GM12878 (cell line): ENCODE measurements at regions of chr20 and their contacts with region 1.

Region 1: GRCh38 chr20:46013826-46014516 is 5.3 kb downstream of the MMP9 start:
- DNase-seq: no peak
- ATAC-seq: peak; percentile 94
- H3K4me3 ChIP-seq: no peak overlapping the region
- H3K27ac ChIP-seq: no peak overlapping the region
- H3K4me1 ChIP-seq: peaks cover 10% of the 10 kb centered on the region
- H3K27me3 ChIP-seq: peaks cover 11 to 12% of the 10 kb centered on the region in 2 experiments; a peak in 3 of 4 replicates
- CTCF ChIP-seq: peak; percentile 60 to 83 (median 63)
- EP300 ChIP-seq: no peak
- POLR2A ChIP-seq: no peak
- RAD21 ChIP-seq: peak; percentile 51

Region 2: DNA sequence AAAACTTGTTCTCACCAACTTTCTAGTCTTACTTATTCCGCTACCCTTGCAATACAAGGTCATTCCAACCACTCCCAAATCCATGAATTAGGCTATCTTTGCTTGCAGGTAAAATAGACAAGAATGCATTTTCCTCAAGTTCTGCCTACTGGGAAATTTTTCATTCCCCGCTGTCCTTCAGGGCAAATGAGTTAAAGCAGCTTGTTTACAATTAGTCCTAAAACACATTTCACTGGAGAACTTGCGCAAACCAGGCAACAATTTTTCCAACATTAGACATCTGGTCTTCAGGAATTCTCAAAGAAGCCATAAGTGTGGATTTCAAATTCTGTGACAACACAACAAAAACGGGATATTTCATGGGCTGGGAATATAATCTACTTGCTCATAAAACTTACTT is 271.4 kb before region 1 on chr20:
- CTCF ChIA-PET with region 1: no interaction called
- POLR2A ChIA-PET with region 1: no interaction called
- RAD21 ChIA-PET with region 1: no interaction called
- SMC1A ChIA-PET with region 1: no interaction called
- in situ Hi-C with region 1: no loop called
- intact Hi-C with region 1: no loop called
- DNase-seq: no peak
- ATAC-seq: no peak
- H3K4me3 ChIP-seq: no peak overlapping the region
- H3K27ac ChIP-seq: no peak overlapping the region
- H3K4me1 ChIP-seq: no peaks in the 10 kb centered on the region
- H3K27me3 ChIP-seq: no peaks in the 10 kb centered on the region
- CTCF ChIP-seq: no peak
- EP300 ChIP-seq: no peak
- POLR2A ChIP-seq: no peak
- RAD21 ChIP-seq: no peak

Region 3: GRCh38 chr20:45987108-45987780 is 26.7 kb before region 1 on chr20:
- CTCF ChIA-PET with region 1: interaction called, 190 read pairs
- POLR2A ChIA-PET with region 1: interaction called, 3 read pairs
- RAD21 ChIA-PET with region 1: interaction called, 66 read pairs
- SMC1A ChIA-PET with region 1: interaction called, 12 read pairs
- in situ Hi-C with region 1: no loop called
- intact Hi-C with region 1: loop called (anchors 1 kb)
- DNase-seq: no peak
- ATAC-seq: peak; percentile 100
- H3K4me3 ChIP-seq: no peak overlapping the region
- H3K27ac ChIP-seq: no peak overlapping the region
- H3K4me1 ChIP-seq: peaks cover 6% of the 10 kb centered on the region
- H3K27me3 ChIP-seq: no peaks in the 10 kb centered on the region; a peak in 1 of 4 replicates
- CTCF ChIP-seq: peak; percentile 92 to 96 (median 93)
- EP300 ChIP-seq: no peak
- POLR2A ChIP-seq: no peak
- RAD21 ChIP-seq: peak; percentile 83

Region 4: GRCh38 chr20:45998761-45999160 is 15.2 kb before region 1 on chr20:
- CTCF ChIA-PET with region 1: interaction called, 48 read pairs
- POLR2A ChIA-PET with region 1: interaction called, 3 read pairs
- RAD21 ChIA-PET with region 1: no interaction called
- SMC1A ChIA-PET with region 1: interaction called, 6 read pairs
- in situ Hi-C with region 1: no loop called
- intact Hi-C with region 1: no loop called
- DNase-seq: no peak
- ATAC-seq: peak; percentile 82
- H3K4me3 ChIP-seq: no peak overlapping the region
- H3K27ac ChIP-seq: no peak overlapping the region
- H3K4me1 ChIP-seq: peaks cover 10% of the 10 kb centered on the region
- H3K27me3 ChIP-seq: no peaks in the 10 kb centered on the region; a peak in 1 of 4 replicates
- CTCF ChIP-seq: no peak
- EP300 ChIP-seq: no peak
- POLR2A ChIP-seq: no peak
- RAD21 ChIP-seq: no peak

Region 5: GRCh38 chr20:46111028-46111835 is 97.3 kb after region 1 on chr20:
- CTCF ChIA-PET with region 1: interaction called, 15 read pairs
- POLR2A ChIA-PET with region 1: no interaction called
- RAD21 ChIA-PET with region 1: no interaction called
- SMC1A ChIA-PET with region 1: interaction called, 6 read pairs
- in situ Hi-C with region 1: no loop called
- intact Hi-C with region 1: no loop called
- DNase-seq: peak; percentile 75
- ATAC-seq: peak; percentile 77
- H3K4me3 ChIP-seq: peak overlapping the region; percentile 7; the same call in 1 of the 2 replicates
- H3K27ac ChIP-seq: no peak overlapping the region
- H3K4me1 ChIP-seq: peaks cover 37% of the 10 kb centered on the region
- H3K27me3 ChIP-seq: no peaks in the 10 kb centered on the region
- CTCF ChIP-seq: no peak
- EP300 ChIP-seq: peak; percentile 33 to 51; a peak in 2 of 4 replicates
- POLR2A ChIP-seq: no peak
- RAD21 ChIP-seq: no peak

Region 6: DNA sequence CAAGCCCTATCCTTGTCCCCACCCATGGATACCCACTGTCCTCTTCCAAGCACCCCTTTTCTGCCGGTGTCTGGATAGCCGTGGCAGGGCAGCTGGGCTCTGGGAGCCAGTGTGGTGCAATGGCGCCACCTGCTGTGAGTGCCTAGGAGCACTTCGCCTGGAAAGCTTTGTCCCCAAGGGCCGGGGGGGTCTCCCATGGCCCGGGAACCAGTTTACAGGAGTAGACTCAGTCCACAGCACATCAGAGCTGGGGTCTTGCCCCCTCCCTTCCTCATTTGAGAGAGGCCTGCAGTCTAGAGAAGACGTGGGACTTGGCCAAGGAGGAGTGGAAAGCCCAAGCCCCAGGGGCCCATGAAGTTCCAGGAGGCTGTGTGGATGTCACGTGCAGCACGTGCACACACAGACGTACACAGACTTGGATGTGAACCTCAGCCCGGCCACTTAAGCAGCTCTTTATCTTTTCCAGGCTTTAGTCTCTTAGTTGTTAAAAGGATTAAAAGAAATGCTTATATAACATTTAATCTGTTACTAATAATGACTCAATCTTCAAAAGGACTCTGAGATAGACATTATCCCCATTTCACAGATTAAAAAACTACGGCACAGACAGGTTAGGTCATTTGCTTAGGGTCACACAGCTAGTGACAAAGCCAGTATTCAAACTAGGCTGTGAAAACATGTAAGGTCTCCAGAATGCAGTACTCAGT is 335.2 kb after region 1 on chr20:
- CTCF ChIA-PET with region 1: interaction called, 4 read pairs
- POLR2A ChIA-PET with region 1: interaction called, 4 read pairs
- RAD21 ChIA-PET with region 1: interaction called, 6 read pairs
- SMC1A ChIA-PET with region 1: no interaction called
- in situ Hi-C with region 1: no loop called
- intact Hi-C with region 1: loop called (anchors 2 kb)
- DNase-seq: no peak
- ATAC-seq: peak; percentile 28
- H3K4me3 ChIP-seq: peak overlapping the region; percentile 48; the same call in 1 of the 2 replicates
- H3K27ac ChIP-seq: peak overlapping the region; percentile 91
- H3K4me1 ChIP-seq: peaks cover 33% of the 10 kb centered on the region
- H3K27me3 ChIP-seq: no peaks in the 10 kb centered on the region
- CTCF ChIP-seq: peak; percentile 74 to 83 (median 82)
- EP300 ChIP-seq: no peak
- POLR2A ChIP-seq: peak; percentile 18; the same call in 1 of the 2 replicates
- RAD21 ChIP-seq: peak; percentile 67